Psoas muscle (tissue), 8 donors: ENCODE measurements at regions of chr10 and their contacts with region 1.

Region 1: GRCh38 chr10:99207340-99207739 is 28.3 kb downstream of the HPSE2 start:
- DNase-seq: no peak
- ATAC-seq: no peak
- H3K4me3 ChIP-seq: no peak overlapping the region
- H3K27ac ChIP-seq: no peak overlapping the region
- H3K4me1 ChIP-seq: no peaks in the 10 kb centered on the region
- H3K27me3 ChIP-seq: no peaks in the 10 kb centered on the region
- CTCF ChIP-seq: no peak

Region 2: GRCh38 chr10:98815039-98815885 is 392.1 kb before region 1 on chr10:
- intact Hi-C with region 1: no loop called
- DNase-seq: no peak
- ATAC-seq: no peak
- H3K4me3 ChIP-seq: no peak overlapping the region
- H3K27ac ChIP-seq: no peak overlapping the region
- H3K4me1 ChIP-seq: no peaks in the 10 kb centered on the region
- H3K27me3 ChIP-seq: peaks cover 0 to 3% (median 0%) of the 10 kb centered on the region in 3 donors
- CTCF ChIP-seq: no peak

Region 3: GRCh38 chr10:99161165-99161564 is 46.2 kb before region 1 on chr10:
- intact Hi-C with region 1: loop called in 1 of 2 experiments (anchors 1 kb)
- DNase-seq: no peak
- ATAC-seq: no peak
- H3K4me3 ChIP-seq: no peak overlapping the region
- H3K27ac ChIP-seq: no peak overlapping the region
- H3K4me1 ChIP-seq: no peaks in the 10 kb centered on the region
- H3K27me3 ChIP-seq: no peaks in the 10 kb centered on the region
- CTCF ChIP-seq: no peak

Region 4: DNA sequence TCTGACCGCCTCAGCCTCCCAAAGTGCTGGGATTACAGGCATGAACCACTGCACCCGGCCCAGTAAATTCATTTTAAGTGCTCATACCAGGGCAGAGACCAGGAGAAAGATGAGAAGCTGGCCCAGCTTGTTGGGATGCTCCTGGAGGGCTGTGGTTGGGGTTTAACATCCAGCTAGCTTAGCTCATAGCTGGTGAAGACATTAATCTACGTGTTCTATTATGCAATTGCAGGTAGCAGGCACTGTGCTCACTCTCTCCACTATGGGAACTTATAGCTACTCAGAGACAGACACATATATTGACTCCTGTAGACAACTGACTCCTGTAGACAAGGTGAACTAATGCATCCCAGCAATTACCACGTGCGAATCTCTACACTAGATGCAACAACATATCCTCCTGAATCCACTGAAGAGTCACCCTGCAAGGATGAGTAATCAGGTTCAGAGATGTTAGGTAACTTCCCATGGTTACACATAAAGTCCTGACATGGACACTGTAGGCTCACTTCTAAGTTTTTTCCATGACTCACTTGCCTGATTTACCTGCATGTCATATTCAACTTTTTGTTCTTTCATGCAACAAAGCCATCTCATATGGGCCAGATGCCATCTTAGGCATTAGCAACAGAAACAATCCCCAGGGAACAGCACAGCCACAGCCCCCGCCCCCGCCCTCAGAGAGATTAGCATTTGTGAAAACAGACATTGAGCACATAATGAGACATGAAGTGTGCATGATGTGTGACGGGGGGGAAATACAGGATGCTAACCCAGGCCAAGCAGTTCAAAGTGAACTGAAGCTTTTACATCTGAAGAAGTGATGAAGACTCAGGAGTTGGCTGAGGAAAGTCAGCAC is 941.2 kb after region 1 on chr10:
- intact Hi-C with region 1: no loop called
- DNase-seq: no peak
- ATAC-seq: peak; percentile 60 to 76 (median 72)
- H3K4me3 ChIP-seq: no peak overlapping the region
- H3K27ac ChIP-seq: no peak overlapping the region
- H3K4me1 ChIP-seq: no peaks in the 10 kb centered on the region
- H3K27me3 ChIP-seq: no peaks in the 10 kb centered on the region
- CTCF ChIP-seq: no peak